B cell (primary cell): ENCODE measurements at regions of chr17 and their contacts with region 1.

Region 1: GRCh38 chr17:55513885-55514591 is 2.8 kb upstream of the SMIM36 start:
- DNase-seq: peak; percentile 81
- ATAC-seq: peak; percentile 49
- H3K4me3 ChIP-seq: no peak overlapping the region
- H3K4me3 Mint-ChIP-seq: no peak overlapping the region
- H3K27ac ChIP-seq: no peak overlapping the region
- H3K27ac Mint-ChIP-seq: no peak overlapping the region
- H3K4me1 ChIP-seq: peaks cover 0 to 2% of the 10 kb centered on the region in 2 donors
- H3K4me1 Mint-ChIP-seq: peaks cover 5% of the 10 kb centered on the region
- H3K27me3 ChIP-seq: no peaks in the 10 kb centered on the region
- H3K27me3 Mint-ChIP-seq: peaks cover 7% of the 10 kb centered on the region
- CTCF ChIP-seq: peak; percentile 96

Region 2: GRCh38 chr17:55348749-55349354 is 165.2 kb before region 1 on chr17:
- CTCF ChIA-PET with region 1: interaction called, 111 read pairs
- POLR2A ChIA-PET with region 1: no interaction called
- intact Hi-C with region 1: no loop called
- DNase-seq: peak; percentile 60
- ATAC-seq: peak; percentile 47
- H3K4me3 ChIP-seq: no peak overlapping the region
- H3K4me3 Mint-ChIP-seq: no peak overlapping the region
- H3K27ac ChIP-seq: no peak overlapping the region
- H3K27ac Mint-ChIP-seq: no peak overlapping the region
- H3K4me1 ChIP-seq: no peaks in the 10 kb centered on the region
- H3K4me1 Mint-ChIP-seq: peaks cover 3% of the 10 kb centered on the region
- H3K27me3 ChIP-seq: peaks cover 0 to 3% (median 0%) of the 10 kb centered on the region in 4 experiments
- H3K27me3 Mint-ChIP-seq: peaks cover 11% of the 10 kb centered on the region
- CTCF ChIP-seq: peak; percentile 93

Region 3: DNA sequence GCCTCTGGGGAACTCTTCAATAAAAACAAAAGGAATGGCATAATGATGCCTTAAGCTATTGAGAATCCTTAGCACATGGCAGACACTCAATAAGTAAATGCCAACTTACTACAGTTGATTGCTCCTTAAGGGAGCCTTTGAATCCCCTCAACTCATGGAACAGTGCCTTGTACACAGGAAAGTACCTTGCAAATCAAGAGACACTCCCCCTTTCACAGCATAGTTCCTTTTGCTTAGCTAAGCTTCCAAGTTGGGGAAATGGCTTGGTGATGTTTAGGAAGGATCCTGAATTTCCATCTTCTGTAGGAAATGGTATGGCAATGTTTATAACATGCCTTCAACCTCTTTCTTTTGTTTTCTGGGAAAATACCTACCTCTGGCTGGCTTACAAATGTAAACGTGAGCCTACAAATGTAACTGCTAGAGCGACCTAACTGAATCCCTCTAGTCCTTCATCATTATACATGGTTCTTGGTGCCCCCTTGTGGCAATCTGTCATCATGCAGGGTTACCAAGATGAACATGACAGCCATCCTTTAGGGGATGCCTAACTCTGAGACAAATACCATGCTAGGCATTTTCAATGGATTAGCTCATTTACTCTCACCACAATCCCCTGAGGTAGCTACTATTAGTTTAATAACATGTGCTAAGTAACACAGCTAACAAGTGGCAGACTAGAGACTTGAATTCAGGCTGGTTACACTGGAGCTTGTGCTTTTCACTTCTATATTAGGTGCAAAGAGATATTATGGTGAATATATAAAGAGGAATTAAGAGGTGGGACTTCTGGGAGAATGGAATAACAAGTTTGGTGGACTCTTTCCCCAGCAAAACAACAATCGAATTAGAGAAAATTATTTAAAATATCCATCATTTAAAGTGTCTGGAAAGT is 157.4 kb before region 1 on chr17:
- CTCF ChIA-PET with region 1: interaction called, 111 read pairs
- POLR2A ChIA-PET with region 1: no interaction called
- intact Hi-C with region 1: loop called (anchors 1 kb)
- DNase-seq: peak; percentile 73
- ATAC-seq: peak; percentile 87
- H3K4me3 ChIP-seq: no peak overlapping the region
- H3K4me3 Mint-ChIP-seq: peak overlapping the region; percentile 4
- H3K27ac ChIP-seq: no peak overlapping the region
- H3K27ac Mint-ChIP-seq: no peak overlapping the region
- H3K4me1 ChIP-seq: no peaks in the 10 kb centered on the region
- H3K4me1 Mint-ChIP-seq: peaks cover 5% of the 10 kb centered on the region
- H3K27me3 ChIP-seq: peaks cover 0 to 7% (median 2%) of the 10 kb centered on the region in 4 experiments
- H3K27me3 Mint-ChIP-seq: peaks cover 23% of the 10 kb centered on the region
- CTCF ChIP-seq: peak; percentile 88

Region 4: DNA sequence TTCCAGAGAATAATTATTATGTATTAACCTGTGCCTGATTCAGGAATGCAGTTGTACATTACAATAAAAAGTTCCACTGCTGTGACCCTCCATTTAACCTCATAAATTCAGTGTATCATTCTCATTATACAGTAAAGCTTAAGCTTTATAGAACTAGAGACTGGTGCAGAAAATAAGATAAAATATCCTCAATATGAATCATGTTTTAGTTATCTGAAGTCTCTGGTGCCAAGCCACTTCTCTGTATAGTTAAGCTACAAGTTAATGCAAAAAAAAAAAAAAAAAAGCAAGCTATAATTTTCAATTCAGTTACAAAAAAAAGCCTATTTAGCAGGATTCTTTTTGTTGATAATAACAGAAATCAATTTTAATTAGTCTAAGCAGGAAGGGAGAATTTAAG is 19.6 kb after region 1 on chr17:
- CTCF ChIA-PET with region 1: interaction called, 12 read pairs
- POLR2A ChIA-PET with region 1: no interaction called
- intact Hi-C with region 1: no loop called
- DNase-seq: no peak
- ATAC-seq: no peak
- H3K4me3 ChIP-seq: no peak overlapping the region
- H3K4me3 Mint-ChIP-seq: no peak overlapping the region
- H3K27ac ChIP-seq: no peak overlapping the region
- H3K27ac Mint-ChIP-seq: no peak overlapping the region
- H3K4me1 ChIP-seq: no peaks in the 10 kb centered on the region
- H3K4me1 Mint-ChIP-seq: no peaks in the 10 kb centered on the region
- H3K27me3 ChIP-seq: no peaks in the 10 kb centered on the region
- H3K27me3 Mint-ChIP-seq: peaks cover 1% of the 10 kb centered on the region
- CTCF ChIP-seq: no peak